ENCODE measurements at regions of chr7 and their contacts with region 1.

Region 1: GRCh38 chr7:106041140-106041717 is 70.9 kb downstream of the SYPL1 start:
- DNase-seq: no peak
- ATAC-seq: peak; percentile 45
- H3K4me3 ChIP-seq: no peak overlapping the region
- H3K27ac ChIP-seq: no peak overlapping the region
- H3K4me1 ChIP-seq: peaks cover 2 to 8% of the 10 kb centered on the region in 2 donors
- H3K27me3 ChIP-seq: peaks cover 0 to 14% of the 10 kb centered on the region in 2 donors
- CTCF ChIP-seq: peak; percentile 46 to 79

Region 2: DNA sequence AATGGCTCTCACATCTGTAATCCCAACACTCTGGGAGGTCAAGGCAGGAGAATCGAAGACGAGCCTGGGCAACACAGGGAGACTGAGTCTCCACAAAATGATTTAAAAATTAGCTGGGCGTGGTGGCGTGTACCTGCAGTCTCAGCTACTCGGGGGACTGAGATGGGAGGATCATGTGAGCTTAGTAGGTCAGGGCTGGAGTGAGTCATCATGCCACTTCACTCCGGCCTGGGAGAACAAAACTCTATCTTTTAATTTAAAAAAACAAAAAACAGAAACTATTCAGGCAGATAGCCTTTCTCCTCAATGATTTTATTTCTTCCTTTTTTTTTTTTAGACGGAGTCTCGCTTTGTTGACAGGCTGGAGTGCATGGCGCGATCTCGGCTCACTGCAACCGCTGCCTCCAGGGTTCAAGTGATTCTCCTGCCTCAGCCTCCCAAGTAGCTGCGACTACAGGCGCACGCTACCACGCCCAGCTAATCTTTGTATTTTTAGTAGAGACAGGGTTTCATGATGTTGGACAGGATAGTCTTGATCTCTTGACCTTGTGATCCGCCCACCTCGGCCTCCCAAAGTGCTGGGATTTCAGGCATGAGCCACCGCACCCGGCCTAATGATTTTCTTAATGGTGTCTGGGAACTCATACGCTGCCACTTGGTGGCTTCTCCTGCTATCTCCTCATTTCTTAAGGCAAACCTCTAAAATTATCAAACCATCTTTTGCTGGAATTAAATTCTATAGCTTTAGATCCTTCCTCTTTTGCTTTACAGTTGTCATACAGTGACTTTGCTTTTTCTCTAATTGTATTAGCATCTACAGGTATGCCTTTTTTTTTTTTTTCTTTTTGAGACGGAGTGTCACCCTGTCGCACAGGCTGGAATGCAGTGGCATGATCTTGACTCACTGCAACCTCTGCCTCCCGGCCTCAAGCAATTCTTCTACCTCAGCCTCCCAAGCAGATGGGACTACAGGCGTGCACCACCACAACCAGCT is 675.4 kb before region 1 on chr7:
- intact Hi-C with region 1: no loop called
- DNase-seq: no peak
- ATAC-seq: no peak
- H3K4me3 ChIP-seq: no peak overlapping the region
- H3K27ac ChIP-seq: no peak overlapping the region
- H3K4me1 ChIP-seq: peaks cover 0 to 14% of the 10 kb centered on the region in 2 donors
- H3K27me3 ChIP-seq: no peaks in the 10 kb centered on the region
- CTCF ChIP-seq: no peak

Region 3: DNA sequence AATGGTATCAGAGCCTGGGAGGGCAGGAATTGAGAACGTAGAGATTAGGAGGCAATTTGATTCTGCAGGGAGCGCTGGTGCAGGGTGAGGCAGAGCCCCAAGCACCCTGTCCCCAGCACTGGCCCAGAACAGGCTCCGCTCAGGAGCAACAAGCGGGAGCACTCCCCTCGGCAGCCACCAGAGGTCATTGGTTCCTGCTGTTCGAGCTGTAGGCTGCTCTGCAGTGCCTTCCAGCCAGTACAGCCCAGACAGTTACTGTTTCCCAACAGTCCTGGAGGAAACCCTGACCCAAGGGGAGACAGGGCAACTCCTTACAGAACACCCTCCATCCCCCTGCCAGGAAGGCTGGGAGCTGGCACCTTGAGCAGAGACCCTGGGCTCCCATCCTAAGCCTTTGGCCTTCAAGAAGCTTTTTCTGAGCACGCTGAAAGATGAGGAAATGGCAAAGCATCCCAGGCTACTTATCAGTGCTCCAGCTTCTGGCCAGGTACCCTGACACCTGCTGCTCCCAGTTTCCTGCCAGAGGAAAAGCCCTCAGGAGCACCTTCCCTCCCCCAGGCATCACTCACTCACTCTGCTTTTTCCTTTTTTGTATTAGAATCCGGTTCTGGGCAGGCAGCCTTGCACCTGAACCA is 388.8 kb before region 1 on chr7:
- intact Hi-C with region 1: loop called in 1 of 2 experiments (anchors 10 kb)
- DNase-seq: peak in 3 of 4 donors; percentile 73 to 88 (median 81)
- ATAC-seq: peak; percentile 90
- H3K4me3 ChIP-seq: no peak overlapping the region
- H3K27ac ChIP-seq: no peak overlapping the region
- H3K4me1 ChIP-seq: peaks cover 7 to 30% of the 10 kb centered on the region in 2 donors
- H3K27me3 ChIP-seq: no peaks in the 10 kb centered on the region
- CTCF ChIP-seq: peak; percentile 76 to 86

Region 4: DNA sequence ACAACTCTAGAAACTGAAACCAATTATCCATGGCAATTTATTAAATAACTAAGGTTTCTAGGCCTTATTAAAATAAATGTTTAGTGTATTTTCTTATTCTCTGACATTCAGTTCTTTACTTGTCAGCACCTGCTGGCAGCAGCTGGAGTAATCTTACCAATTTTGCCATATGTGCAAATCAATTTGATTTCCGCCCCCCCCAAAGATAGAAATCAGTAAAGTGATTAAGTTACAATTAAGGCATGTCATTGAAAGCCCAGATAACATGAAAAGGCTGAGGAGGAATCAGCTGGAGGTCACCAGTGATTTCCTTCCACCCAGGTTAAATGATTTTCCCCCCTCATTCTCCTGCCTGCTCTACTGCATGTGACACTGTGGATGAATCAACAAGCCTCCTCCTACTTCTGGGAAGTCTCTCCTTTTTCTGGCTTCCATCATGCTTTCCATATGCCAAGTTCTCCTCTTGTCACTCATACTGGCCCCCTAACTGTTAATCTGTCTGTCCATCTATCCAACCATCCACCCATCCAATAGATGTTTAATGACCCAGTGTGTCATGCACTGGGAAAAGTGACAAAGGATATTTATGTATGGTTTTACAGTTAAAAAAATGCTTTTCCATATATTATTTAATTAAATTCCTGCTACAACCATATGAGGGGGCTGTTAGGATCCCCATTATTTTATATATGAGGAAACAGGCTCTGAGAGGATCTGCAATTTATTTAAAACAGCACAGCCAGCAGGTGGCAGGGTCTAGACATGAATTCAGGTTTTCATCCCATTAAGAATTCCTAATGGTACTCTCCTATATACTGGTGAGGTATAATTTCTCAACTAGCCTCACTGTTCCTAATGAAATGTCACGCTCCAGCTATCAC is 281.3 kb before region 1 on chr7:
- intact Hi-C with region 1: loop called in 1 of 2 experiments (anchors 5 kb)
- DNase-seq: peak in 2 of 4 donors; percentile 39 to 63
- ATAC-seq: peak; percentile 90
- H3K4me3 ChIP-seq: no peak overlapping the region
- H3K27ac ChIP-seq: no peak overlapping the region
- H3K4me1 ChIP-seq: peaks cover 0 to 3% of the 10 kb centered on the region in 2 donors
- H3K27me3 ChIP-seq: no peaks in the 10 kb centered on the region
- CTCF ChIP-seq: peak; percentile 39 to 53

Region 5: GRCh38 chr7:106153891-106154449 is 112.7 kb after region 1 on chr7:
- intact Hi-C with region 1: no loop called
- DNase-seq: peak; percentile 75 to 91 (median 82)
- ATAC-seq: peak; percentile 100
- H3K4me3 ChIP-seq: no peak overlapping the region
- H3K27ac ChIP-seq: no peak overlapping the region
- H3K4me1 ChIP-seq: peaks cover 0 to 9% of the 10 kb centered on the region in 2 donors
- H3K27me3 ChIP-seq: peaks cover 0 to 23% of the 10 kb centered on the region in 2 donors
- CTCF ChIP-seq: peak; percentile 88 to 89

Region 6: GRCh38 chr7:106346678-106347217 is 305.5 kb after region 1 on chr7:
- intact Hi-C with region 1: no loop called
- DNase-seq: no peak
- ATAC-seq: peak; percentile 60
- H3K4me3 ChIP-seq: no peak overlapping the region
- H3K27ac ChIP-seq: peak overlapping the region; percentile 74 to 96
- H3K4me1 ChIP-seq: peaks cover 0 to 40% of the 10 kb centered on the region in 2 donors
- H3K27me3 ChIP-seq: no peaks in the 10 kb centered on the region
- CTCF ChIP-seq: no peak

Measured in left lung (tissue), 14 donors.